Esophagus muscularis mucosa (tissue), 4 donors: ENCODE measurements at regions of chr11 and their contacts with region 1.

Region 1: DNA sequence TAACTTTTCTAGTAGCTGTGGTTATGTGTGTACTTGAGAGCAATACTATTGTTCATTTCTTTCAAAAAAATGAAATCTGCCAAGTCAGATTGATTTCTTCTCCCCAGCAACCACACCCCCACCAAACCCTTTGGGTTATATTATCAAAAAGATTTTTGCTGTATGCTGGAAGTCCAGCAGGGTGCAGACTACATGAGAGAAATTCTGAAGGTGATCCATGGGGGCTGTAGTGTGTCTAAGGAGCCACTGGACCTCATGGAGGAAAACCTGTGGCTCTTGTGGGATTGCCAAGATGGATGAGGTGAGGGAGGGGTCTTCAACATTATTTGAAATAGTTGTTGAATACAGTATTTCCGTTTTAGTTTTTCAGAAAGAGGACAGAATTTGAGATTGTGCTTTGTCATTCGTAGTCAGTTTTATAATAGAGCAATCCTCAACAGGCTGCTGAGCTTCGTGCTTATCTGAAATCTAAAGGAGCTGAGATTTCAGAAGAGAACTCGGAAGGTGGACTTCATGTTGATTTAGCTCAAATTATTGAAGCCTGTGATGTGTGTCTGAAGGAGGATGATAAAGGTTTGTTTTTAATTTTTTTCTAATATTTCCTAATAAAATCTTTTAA is 3.0 kb downstream of the EIF3M start:
- DNase-seq: no peak
- H3K4me3 ChIP-seq: no peak overlapping the region
- H3K27ac ChIP-seq: no peak overlapping the region
- H3K4me1 ChIP-seq: peaks cover 20 to 32% (median 24%) of the 10 kb centered on the region in 4 donors
- H3K27me3 ChIP-seq: no peaks in the 10 kb centered on the region
- CTCF ChIP-seq: no peak
- EP300 ChIP-seq: no peak
- POLR2A ChIP-seq: no peak

Region 2: GRCh38 chr11:32081129-32081641 is 505.5 kb before region 1 on chr11:
- intact Hi-C with region 1: no loop called
- DNase-seq: no peak
- H3K4me3 ChIP-seq: no peak overlapping the region
- H3K27ac ChIP-seq: no peak overlapping the region
- H3K4me1 ChIP-seq: peaks cover 0 to 3% (median 0%) of the 10 kb centered on the region in 4 donors
- H3K27me3 ChIP-seq: no peaks in the 10 kb centered on the region
- CTCF ChIP-seq: no peak
- EP300 ChIP-seq: no peak
- POLR2A ChIP-seq: no peak

Region 3: GRCh38 chr11:32899438-32899837 is 312.8 kb after region 1 on chr11:
- intact Hi-C with region 1: loop called (anchors 5 kb)
- DNase-seq: no peak
- H3K4me3 ChIP-seq: no peak overlapping the region
- H3K27ac ChIP-seq: no peak overlapping the region
- H3K4me1 ChIP-seq: peaks cover 11 to 21% (median 16%) of the 10 kb centered on the region in 4 donors
- H3K27me3 ChIP-seq: no peaks in the 10 kb centered on the region
- CTCF ChIP-seq: no peak
- EP300 ChIP-seq: no peak
- POLR2A ChIP-seq: no peak

Region 4: DNA sequence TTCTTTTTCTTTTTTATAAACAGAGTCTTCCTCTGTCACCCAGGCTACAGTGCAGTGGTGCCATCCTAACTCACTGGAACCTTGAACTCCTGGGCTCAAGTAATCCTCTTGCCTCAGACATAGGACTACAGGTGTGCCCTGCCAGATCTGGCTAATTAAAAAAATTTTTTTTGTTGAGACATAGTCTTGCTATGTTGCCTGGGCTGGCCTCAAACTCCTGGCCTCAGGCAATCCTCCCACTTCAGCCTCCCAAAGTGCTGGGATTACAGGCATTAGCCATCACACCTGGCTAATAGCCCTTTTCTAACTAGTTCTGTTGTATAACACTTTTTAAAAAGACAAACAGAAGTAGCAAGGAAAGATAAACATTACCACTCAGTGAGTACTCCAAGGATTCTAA is 517.2 kb after region 1 on chr11:
- intact Hi-C with region 1: no loop called
- DNase-seq: no peak
- H3K4me3 ChIP-seq: no peak overlapping the region
- H3K27ac ChIP-seq: no peak overlapping the region
- H3K4me1 ChIP-seq: no peaks in the 10 kb centered on the region
- H3K27me3 ChIP-seq: no peaks in the 10 kb centered on the region
- CTCF ChIP-seq: no peak
- EP300 ChIP-seq: no peak
- POLR2A ChIP-seq: no peak